A549 (cell line): ENCODE measurements at regions of chr20 and their contacts with region 1.

Region 1: GRCh38 chr20:266596-267562 is 9.4 kb downstream of the DEFB132 start:
- DNase-seq: peak; percentile 91
- ATAC-seq: peak; percentile 81 to 95
- H3K4me3 ChIP-seq: peak overlapping the region; percentile 41
- H3K27ac ChIP-seq: peak overlapping the region; percentile 43 to 83; a peak in 5 of 6 replicates
- H3K4me1 ChIP-seq: no peaks in the 10 kb centered on the region
- CTCF ChIP-seq: peak; percentile 96
- EP300 ChIP-seq: no peak
- POLR2A ChIP-seq: peak; percentile 51
- RAD21 ChIP-seq: peak; percentile 94

Region 2: GRCh38 chr20:235891-236290 is 31.0 kb before region 1 on chr20:
- CTCF ChIA-PET with region 1: interaction called, 17 read pairs
- POLR2A ChIA-PET with region 1: no interaction called
- DNase-seq: peak in 1 of 2 experiments; percentile 55
- ATAC-seq: peak; percentile 79 to 80
- H3K4me3 ChIP-seq: no peak overlapping the region
- H3K27ac ChIP-seq: no peak overlapping the region
- H3K4me1 ChIP-seq: no peaks in the 10 kb centered on the region
- CTCF ChIP-seq: no peak
- EP300 ChIP-seq: no peak
- POLR2A ChIP-seq: no peak
- RAD21 ChIP-seq: peak; percentile 44 to 47

Region 3: GRCh38 chr20:278607-279571 is 12.0 kb after region 1 on chr20:
- CTCF ChIA-PET with region 1: interaction called, 57 read pairs
- POLR2A ChIA-PET with region 1: no interaction called
- DNase-seq: no peak
- ATAC-seq: no peak
- H3K4me3 ChIP-seq: no peak overlapping the region
- H3K27ac ChIP-seq: no peak overlapping the region
- H3K4me1 ChIP-seq: no peaks in the 10 kb centered on the region
- CTCF ChIP-seq: no peak
- EP300 ChIP-seq: no peak
- POLR2A ChIP-seq: no peak
- RAD21 ChIP-seq: no peak

Region 4: GRCh38 chr20:284172-284790 is 17.4 kb after region 1 on chr20:
- CTCF ChIA-PET with region 1: interaction called, 57 read pairs
- POLR2A ChIA-PET with region 1: no interaction called
- DNase-seq: no peak
- ATAC-seq: no peak
- H3K4me3 ChIP-seq: no peak overlapping the region
- H3K27ac ChIP-seq: no peak overlapping the region
- H3K4me1 ChIP-seq: no peaks in the 10 kb centered on the region
- CTCF ChIP-seq: no peak
- EP300 ChIP-seq: no peak
- POLR2A ChIP-seq: no peak
- RAD21 ChIP-seq: no peak

Region 5: DNA sequence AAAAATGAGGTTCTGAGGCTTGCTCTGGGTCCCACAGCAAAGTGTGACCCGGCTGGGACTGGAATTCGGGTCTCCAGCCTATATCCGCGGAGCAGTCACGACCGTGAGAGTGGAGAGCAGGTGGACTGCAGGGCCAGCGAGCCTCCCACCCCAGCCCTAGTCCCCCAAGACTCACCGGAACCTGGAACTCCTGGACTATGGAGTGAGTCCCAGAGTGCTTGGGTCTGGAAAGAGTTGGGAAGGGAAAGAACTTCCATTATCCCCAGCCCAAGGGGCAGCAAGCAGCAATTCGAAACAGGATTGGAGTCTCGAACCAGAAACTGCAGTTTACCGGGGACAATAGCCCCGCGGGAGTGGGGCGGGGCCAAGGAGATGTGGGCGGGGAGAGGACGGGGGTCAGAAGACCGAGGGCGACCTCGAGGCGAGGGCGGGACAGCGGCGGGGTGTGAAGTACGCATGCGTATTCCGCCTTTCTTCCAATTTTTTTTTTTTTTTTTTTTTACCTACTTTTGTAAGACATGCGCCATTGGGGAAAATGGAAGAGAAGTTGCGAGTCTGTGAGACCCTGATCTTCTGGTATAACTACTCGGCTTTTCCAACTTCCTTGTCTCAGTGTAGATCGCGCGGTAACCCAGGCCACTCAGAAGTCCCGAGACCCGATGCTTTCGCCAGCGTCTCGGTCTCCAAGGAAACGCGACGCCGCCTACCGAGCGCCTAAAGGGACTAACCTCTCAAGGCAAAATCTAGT is 23.4 kb after region 1 on chr20 and contains the start of gene C20orf96:
- CTCF ChIA-PET with region 1: interaction called, 57 read pairs
- POLR2A ChIA-PET with region 1: no interaction called
- DNase-seq: peak; percentile 97 to 98
- ATAC-seq: peak; percentile 95 to 97
- H3K4me3 ChIP-seq: peak within 1 kb of the TSS; percentile 62
- H3K27ac ChIP-seq: peak within 1 kb of the TSS; percentile 79 to 85
- H3K4me1 ChIP-seq: peaks cover 10% of the 10 kb centered on the region
- CTCF ChIP-seq: peak; percentile 15; the same call in 1 of the 3 replicates
- EP300 ChIP-seq: no peak
- POLR2A ChIP-seq: peak; percentile 40
- RAD21 ChIP-seq: no peak
- polyA plus RNA-seq, gene C20orf96: 23.2 and 23.9 TPM in 2 replicates

Region 6: GRCh38 chr20:517221-517620 is 250.3 kb after region 1 on chr20:
- CTCF ChIA-PET with region 1: no interaction called
- POLR2A ChIA-PET with region 1: no interaction called
- DNase-seq: no peak
- ATAC-seq: no peak
- H3K4me3 ChIP-seq: no peak overlapping the region
- H3K27ac ChIP-seq: no peak overlapping the region
- H3K4me1 ChIP-seq: peaks cover 10% of the 10 kb centered on the region; the same call in 2 of the 3 replicates
- CTCF ChIP-seq: no peak
- EP300 ChIP-seq: no peak
- POLR2A ChIP-seq: no peak
- RAD21 ChIP-seq: no peak